Vagina (tissue), 2 donors: ENCODE measurements at regions of chr19 and their contacts with region 1.

Region 1: GRCh38 chr19:36378625-36379509 is at the start of gene ZFP14:
- DNase-seq: peak in 1 of 2 donors; percentile 96
- H3K4me3 ChIP-seq: peak within 1 kb of the TSS; percentile 74 to 78
- H3K27ac ChIP-seq: peak within 1 kb of the TSS; percentile 74
- H3K4me1 ChIP-seq: peaks cover 18% of the 10 kb centered on the region
- H3K27me3 ChIP-seq: no peaks in the 10 kb centered on the region
- CTCF ChIP-seq: peak in 1 of 3 experiments; percentile 6
- POLR2A ChIP-seq: peak in 1 of 2 donors; percentile 32
- total RNA-seq, gene ZFP14: 4.2 TPM

Region 2: DNA sequence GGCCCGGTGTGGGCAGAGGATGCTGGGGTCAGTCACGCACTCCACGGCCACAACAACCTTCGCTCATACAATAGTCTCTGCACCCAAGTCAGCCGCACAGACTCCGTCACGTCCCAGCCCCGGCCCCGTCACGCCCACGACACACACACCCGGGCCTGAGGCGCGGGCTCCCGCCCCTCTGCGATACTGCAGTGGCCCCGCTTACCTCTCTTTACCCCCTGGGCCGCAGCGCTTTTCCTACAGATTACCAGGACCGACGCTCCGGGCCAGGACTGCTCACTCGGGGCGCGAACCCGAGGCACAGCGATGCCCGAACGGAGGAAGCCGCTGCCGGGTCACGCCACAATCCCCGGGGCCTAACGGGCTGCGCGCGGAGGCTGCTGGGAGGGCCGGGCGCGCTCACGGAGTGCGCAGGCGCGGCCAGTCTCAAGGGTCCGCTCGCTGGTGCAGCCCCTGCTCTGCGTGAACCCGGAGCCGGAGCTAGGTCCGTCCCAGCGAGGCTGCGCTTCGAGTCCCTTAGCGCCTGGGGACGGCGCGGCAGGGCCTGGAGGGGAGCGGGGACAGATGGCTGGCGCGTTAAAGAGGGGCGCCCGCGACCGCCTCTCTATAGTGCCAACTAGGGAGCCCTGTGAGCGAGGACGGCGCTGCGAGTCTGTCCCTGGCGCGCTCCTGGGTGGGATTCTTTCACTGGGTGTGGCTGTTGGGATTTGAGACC is 39.6 kb after region 1 on chr19 and contains the start of gene ZFP82:
- intact Hi-C with region 1: loop called (anchors 2 kb)
- DNase-seq: no peak
- H3K4me3 ChIP-seq: peak within 1 kb of the TSS; percentile 77 to 82
- H3K27ac ChIP-seq: peak within 1 kb of the TSS; percentile 90
- H3K4me1 ChIP-seq: peaks cover 10% of the 10 kb centered on the region
- H3K27me3 ChIP-seq: no peaks in the 10 kb centered on the region
- CTCF ChIP-seq: no peak
- POLR2A ChIP-seq: peak in 1 of 2 donors; percentile 21
- total RNA-seq, gene ZFP82: 4.7 TPM